Motor neuron (in vitro differentiated cells): ENCODE measurements at regions of chr12 and their contacts with region 1.

Region 1: DNA sequence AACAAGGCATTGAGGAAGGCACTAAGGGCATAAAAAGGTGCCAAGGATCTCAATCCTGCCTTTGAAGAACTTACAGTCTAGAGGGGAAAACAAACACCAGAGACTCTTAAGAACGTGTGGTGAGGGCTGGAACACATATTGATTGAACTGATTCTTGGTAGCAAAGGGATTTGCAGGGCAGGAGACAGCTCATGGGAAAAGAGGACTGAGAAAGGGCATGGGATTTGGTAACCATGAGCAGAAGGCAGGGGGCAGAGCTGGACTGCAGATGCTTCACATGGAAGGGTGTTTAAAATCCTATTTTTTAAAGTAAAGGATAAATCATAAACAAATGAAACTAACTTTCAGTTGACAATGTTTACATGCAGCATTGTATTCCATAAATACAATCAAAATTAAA is 203.1 kb downstream of the ITPR2 start:
- ATAC-seq: no peak
- H3K4me3 ChIP-seq: no peak overlapping the region
- H3K27ac ChIP-seq: no peak overlapping the region
- H3K4me1 ChIP-seq: no peaks in the 10 kb centered on the region

Region 2: GRCh38 chr12:26097046-26097878 is 532.6 kb before region 1 on chr12:
- in situ Hi-C with region 1: loop called in 4 of 9 experiments (anchors 25 kb)
- ATAC-seq: peak; percentile 80 to 98 (median 90)
- H3K4me3 ChIP-seq: no peak overlapping the region
- H3K27ac ChIP-seq: no peak overlapping the region
- H3K4me1 ChIP-seq: no peaks in the 10 kb centered on the region

Region 3: DNA sequence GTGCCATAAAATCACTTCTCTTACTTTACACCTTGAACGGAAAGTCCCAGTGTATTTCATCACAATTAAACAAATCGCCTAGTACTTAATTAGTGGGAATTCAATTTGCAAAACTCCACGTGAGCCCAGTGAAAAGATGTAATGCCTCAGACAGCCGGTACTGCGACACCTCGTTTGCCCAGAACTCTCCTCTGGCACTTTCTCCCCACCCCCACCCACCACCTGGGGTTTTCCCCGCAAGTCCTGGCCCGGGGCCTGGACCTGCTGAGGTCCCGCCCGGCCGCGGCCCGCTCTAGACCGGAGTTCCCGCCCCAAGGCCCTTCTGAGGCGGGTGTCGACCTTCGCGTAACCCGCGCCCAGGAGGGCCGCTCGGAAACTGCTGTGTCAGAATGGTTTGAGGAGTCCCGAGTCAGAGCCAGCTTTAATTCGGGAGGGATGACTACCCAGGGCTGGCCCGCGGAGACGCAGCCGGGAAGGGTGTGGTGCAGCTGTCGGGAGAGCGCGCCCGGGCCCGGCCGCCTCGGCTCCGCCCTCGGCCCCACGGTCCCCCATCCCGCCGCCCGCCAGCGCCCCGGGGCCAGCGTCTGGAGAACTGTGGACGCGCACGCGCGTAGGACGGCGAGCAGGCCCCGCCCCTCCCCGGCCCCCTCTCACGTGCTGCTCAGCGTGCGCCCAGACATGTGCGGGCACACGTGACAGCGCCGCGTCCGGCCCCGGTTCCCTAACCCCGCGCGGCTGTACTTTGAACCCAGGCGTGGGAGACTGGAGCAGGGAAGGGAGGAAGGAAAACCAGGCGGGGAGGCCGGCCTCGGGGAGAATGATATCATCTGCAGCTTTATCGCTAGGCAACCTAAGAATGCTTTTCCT is 515.8 kb before region 1 on chr12:
- in situ Hi-C with region 1: loop called in 3 of 9 experiments (anchors 25 kb)
- ATAC-seq: peak; percentile 75 to 96 (median 92)
- H3K4me3 ChIP-seq: peak overlapping the region; percentile 42 to 58 (median 47)
- H3K27ac ChIP-seq: peak overlapping the region in 1 of 2 donors; percentile 61
- H3K4me1 ChIP-seq: peaks cover 9 to 18% of the 10 kb centered on the region in 2 donors

Region 4: DNA sequence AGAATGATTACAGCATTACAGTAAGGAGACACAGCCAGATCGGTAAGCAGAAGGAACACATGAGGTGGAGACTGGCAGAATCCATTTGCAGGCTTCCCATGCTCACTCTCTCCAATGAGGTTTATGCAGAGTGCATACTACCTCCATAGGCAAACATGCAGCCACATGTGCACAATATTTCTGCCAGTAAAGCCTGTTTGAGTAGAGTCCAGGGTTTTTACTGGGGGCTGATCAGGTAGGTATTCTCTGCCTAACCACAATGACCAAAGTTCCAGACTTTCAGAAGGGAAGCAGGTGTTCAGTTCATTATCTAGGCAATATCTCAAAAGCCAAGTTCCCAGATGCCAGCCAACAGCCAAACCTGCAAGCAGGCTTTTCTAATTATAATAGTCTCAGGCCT is 276.8 kb after region 1 on chr12:
- in situ Hi-C with region 1: no loop called
- ATAC-seq: peak in 1 of 8 experiments; percentile 74
- H3K4me3 ChIP-seq: no peak overlapping the region
- H3K27ac ChIP-seq: no peak overlapping the region
- H3K4me1 ChIP-seq: no peaks in the 10 kb centered on the region